ENCODE measurements at regions of chr6 and their contacts with region 1.

Region 1: DNA sequence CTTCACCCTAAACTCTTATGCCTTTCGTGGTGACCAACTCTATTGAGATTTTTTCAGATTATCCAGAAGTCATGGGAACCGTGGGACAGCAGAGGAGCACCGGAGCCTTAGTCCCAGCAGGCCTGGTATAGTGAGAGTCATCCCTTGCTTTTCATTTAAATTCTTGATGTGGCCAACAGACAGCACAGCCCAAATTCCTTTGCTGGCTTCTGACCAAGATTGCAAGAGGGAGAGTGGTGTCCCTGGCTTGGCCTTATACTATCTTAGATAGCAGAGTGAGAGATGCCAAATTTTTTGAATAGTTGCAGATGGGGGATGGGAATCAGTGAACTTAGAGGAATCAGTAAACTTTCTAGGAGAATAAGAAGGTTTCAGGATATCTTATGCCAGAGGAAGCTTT is 7.8 kb downstream of the STX11 start:
- DNase-seq: no peak
- ATAC-seq: no peak
- H3K4me3 Mint-ChIP-seq: no peak overlapping the region
- H3K27ac Mint-ChIP-seq: no peak overlapping the region
- H3K4me1 Mint-ChIP-seq: peaks cover 48% of the 10 kb centered on the region
- H3K27me3 Mint-ChIP-seq: no peaks in the 10 kb centered on the region
- CTCF ChIP-seq: no peak

Region 2: DNA sequence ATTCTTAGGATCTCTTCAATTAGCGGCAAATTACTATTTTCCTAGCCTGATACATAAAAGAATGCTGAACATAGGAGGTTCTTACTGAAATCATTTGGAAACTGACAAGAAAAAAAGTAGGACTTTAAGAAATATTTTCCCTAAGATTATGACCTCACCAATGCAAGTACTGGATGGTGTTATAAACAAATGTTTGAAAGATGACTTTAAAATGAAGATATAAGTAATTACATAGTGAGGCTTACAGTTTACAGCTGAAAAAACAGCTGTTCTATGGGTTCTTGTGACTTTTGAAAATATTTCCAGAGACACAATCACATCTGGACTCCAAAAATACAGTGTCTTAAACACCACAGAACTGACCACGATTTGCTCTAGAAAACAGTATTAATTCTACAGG is 772.5 kb before region 1 on chr6:
- CTCF ChIA-PET with region 1: no interaction called
- POLR2A ChIA-PET with region 1: no interaction called
- intact Hi-C with region 1: no loop called
- DNase-seq: no peak
- ATAC-seq: no peak
- H3K4me3 Mint-ChIP-seq: no peak overlapping the region
- H3K27ac Mint-ChIP-seq: no peak overlapping the region
- H3K4me1 Mint-ChIP-seq: no peaks in the 10 kb centered on the region
- H3K27me3 Mint-ChIP-seq: peaks cover 10% of the 10 kb centered on the region
- CTCF ChIP-seq: no peak

Region 3: DNA sequence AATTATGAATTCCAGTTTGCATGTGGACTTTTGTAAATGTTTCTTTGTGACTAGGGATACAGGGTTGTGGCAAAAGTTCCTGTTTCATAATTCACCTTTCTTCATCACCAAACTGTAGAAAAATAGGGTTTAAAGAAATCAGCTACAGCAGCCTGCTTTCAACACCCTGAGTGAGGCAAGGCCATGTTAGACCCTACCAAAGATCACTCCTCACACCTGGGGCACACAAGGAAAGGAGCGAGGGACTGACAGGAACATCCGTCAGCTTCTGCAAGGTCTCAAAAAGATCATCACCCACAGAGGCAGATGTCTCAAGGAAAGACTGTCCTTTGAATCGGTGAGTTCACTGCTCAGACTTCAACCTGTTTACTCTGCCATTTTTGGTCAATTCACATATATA is 18.3 kb before region 1 on chr6:
- CTCF ChIA-PET with region 1: no interaction called
- POLR2A ChIA-PET with region 1: no interaction called
- intact Hi-C with region 1: loop called (anchors 2 kb)
- DNase-seq: no peak
- ATAC-seq: no peak
- H3K4me3 Mint-ChIP-seq: no peak overlapping the region
- H3K27ac Mint-ChIP-seq: no peak overlapping the region
- H3K4me1 Mint-ChIP-seq: peaks cover 15% of the 10 kb centered on the region
- H3K27me3 Mint-ChIP-seq: no peaks in the 10 kb centered on the region
- CTCF ChIP-seq: no peak

Region 4: GRCh38 chr6:144171406-144171805 is 13.3 kb after region 1 on chr6:
- CTCF ChIA-PET with region 1: no interaction called
- POLR2A ChIA-PET with region 1: no interaction called
- intact Hi-C with region 1: loop called (anchors 2 kb)
- DNase-seq: no peak
- ATAC-seq: no peak
- H3K4me3 Mint-ChIP-seq: no peak overlapping the region
- H3K27ac Mint-ChIP-seq: no peak overlapping the region
- H3K4me1 Mint-ChIP-seq: peaks cover 3% of the 10 kb centered on the region
- H3K27me3 Mint-ChIP-seq: no peaks in the 10 kb centered on the region
- CTCF ChIP-seq: no peak

Region 5: DNA sequence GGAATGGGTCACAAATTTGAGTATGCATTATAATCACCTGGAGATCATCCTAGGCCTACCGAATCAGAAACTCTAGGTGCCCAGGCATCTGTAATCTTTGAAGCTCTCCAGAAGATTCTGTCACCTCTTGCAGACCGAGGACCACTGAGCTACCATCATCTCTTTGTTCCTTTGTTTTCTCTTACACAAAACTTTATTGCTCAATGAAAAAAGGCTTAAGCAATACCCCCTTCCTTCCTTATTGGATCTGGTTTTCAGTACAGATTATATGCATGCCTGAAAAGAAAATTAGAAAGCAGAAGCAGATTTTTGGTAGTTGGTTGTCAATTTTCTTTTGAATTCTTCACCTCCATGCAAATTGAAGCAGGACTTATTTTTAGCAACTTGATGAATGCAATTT is 23.5 kb after region 1 on chr6:
- CTCF ChIA-PET with region 1: no interaction called
- POLR2A ChIA-PET with region 1: no interaction called
- intact Hi-C with region 1: no loop called
- DNase-seq: no peak
- ATAC-seq: no peak
- H3K4me3 Mint-ChIP-seq: no peak overlapping the region
- H3K27ac Mint-ChIP-seq: no peak overlapping the region
- H3K4me1 Mint-ChIP-seq: peaks cover 30% of the 10 kb centered on the region
- H3K27me3 Mint-ChIP-seq: no peaks in the 10 kb centered on the region
- CTCF ChIP-seq: no peak

Measured in activated B cell treated with CpG ODN at 0.5 μM for 24 hours (primary cell).